ENCODE measurements at regions of chr11 and their contacts with region 1.

Region 1: DNA sequence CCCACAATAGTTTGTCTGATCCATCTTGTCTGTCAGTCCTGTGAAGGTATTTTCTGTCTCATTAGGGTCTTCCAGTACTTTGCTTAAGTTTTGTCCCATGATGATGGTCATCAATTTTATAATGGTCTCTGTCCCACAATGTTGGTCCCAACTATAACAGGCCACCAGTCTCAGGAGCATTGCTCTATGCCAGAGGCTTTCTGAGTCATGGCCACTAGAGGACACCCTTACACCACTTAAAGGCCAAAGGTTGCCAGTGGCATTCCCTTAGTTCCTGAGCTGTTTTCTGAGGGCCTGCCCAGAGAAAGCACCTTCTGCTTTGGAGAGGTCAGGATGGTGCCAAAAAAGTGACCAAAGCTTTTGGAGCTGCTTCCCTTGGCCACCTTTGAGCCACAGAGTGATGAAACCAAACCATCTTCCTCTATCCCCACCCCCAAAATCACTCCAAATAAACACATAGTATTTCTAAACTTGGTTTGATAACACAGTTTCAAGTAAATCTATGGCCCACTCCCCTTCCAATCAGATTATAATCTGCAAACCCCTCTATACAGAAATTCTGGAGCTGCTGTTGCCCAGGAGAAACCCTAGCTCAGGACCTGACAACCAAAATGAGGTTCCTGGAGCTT is 19.3 kb downstream of the EIF3F start:
- DNase-seq: peak in 1 of 2 donors; percentile 47
- H3K4me3 ChIP-seq: no peak overlapping the region
- H3K27ac ChIP-seq: no peak overlapping the region
- H3K4me1 ChIP-seq: no peaks in the 10 kb centered on the region
- H3K27me3 ChIP-seq: no peaks in the 10 kb centered on the region
- CTCF ChIP-seq: peak; percentile 38 to 71 (median 60)
- POLR2A ChIP-seq: no peak

Region 2: DNA sequence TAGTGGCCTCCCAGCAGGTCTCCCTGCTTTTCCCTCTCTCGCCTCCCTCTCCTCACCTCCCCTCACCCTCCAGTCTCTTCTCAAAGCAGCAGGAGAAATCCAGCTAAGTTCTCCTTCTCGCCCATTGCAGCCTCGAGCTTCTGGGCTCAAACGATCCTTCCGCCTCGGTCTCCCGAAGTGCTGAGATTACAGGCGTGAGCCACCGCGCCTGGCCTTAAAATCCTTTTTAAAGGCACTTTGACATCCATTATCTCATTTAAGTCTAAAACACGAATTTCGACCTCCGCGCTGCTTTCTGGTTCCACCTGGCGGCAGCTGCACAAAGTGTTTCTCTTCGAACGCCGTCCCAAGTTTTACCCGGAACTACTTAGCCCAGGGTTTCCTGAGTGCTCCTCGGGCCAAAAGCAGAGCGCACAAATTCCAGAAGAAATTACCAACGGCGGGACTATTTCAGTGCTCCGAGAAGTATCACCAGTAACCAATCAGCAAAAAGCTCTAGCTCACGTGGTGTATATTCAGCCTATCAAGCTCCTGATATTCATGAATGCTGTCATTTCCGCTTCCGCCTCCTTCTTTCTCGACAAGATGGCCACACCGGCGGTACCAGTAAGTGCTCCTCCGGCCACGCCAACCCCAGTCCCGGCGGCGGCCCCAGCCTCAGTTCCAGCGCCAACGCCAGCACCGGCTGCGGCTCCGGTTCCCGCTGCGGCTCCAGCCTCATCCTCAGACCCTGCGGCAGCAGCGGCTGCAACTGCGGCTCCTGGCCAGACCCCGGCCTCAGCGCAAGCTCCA is 19.5 kb before region 1 on chr11 and contains the start of gene EIF3F:
- intact Hi-C with region 1: no loop called
- DNase-seq: peak; percentile 86 to 95
- H3K4me3 ChIP-seq: peak within 1 kb of the TSS; percentile 59 to 91 (median 70)
- H3K27ac ChIP-seq: peak within 1 kb of the TSS; percentile 81 to 89
- H3K4me1 ChIP-seq: peaks cover 10 to 14% of the 10 kb centered on the region in 2 donors
- H3K27me3 ChIP-seq: no peaks in the 10 kb centered on the region
- CTCF ChIP-seq: peak; percentile 92 to 97 (median 92)
- POLR2A ChIP-seq: no peak
- total RNA-seq, gene EIF3F: 145 to 180 (median 151) TPM

Region 3: GRCh38 chr11:8558436-8558835 is 552.0 kb after region 1 on chr11:
- intact Hi-C with region 1: loop called (anchors 5 kb)
- DNase-seq: no peak
- H3K4me3 ChIP-seq: no peak overlapping the region
- H3K27ac ChIP-seq: no peak overlapping the region
- H3K4me1 ChIP-seq: no peaks in the 10 kb centered on the region
- H3K27me3 ChIP-seq: no peaks in the 10 kb centered on the region
- CTCF ChIP-seq: no peak
- POLR2A ChIP-seq: no peak

Measured in breast epithelium (tissue), 4 donors.